ENCODE measurements at regions of chr12 and their contacts with region 1.

Region 1: GRCh38 chr12:27733052-27733656 is 22.5 kb downstream of the MRPS35 start:
- DNase-seq: peak in 6 of 9 donors; percentile 12 to 42 (median 28)
- ATAC-seq: peak; percentile 73
- H3K4me3 ChIP-seq: no peak overlapping the region
- H3K4me3 Mint-ChIP-seq: no peak overlapping the region
- H3K27ac ChIP-seq: no peak overlapping the region
- H3K27ac Mint-ChIP-seq: no peak overlapping the region
- H3K4me1 ChIP-seq: no peaks in the 10 kb centered on the region
- H3K4me1 Mint-ChIP-seq: peaks cover 0 to 3% (median 0%) of the 10 kb centered on the region in 7 donors
- H3K27me3 ChIP-seq: no peaks in the 10 kb centered on the region
- H3K27me3 Mint-ChIP-seq: no peaks in the 10 kb centered on the region

Region 2: DNA sequence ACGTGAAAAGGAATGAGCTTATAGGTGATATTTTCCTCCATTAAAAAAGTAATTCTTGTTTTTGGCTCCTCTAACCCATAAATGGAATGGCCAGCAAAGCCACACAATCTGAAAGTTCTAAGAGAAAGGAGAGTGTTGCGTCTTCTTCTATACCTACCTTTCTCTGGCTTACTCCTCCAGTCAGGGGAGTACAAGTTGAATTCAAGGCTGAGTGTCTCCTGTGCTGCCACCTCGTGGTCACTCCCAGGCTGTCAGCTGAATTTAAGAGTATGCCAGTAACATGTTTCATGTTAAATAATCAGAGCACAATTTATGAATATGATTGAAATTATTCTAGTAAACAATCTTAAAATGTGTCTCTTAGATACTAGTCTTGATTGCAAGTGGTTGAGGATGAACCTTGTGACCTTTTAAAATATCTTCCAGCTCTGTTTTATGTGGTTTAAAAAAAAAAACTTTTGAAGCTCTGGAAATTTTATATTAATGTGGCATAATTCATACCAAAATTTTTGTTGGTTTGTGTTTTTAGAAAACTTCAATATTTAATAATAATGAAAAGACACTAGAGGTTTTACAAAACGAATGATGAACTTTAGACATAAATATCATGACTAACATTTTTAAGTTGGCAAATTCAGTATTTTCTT is 207.7 kb after region 1 on chr12:
- CTCF ChIA-PET with region 1: interaction called, 13 read pairs
- POLR2A ChIA-PET with region 1: no interaction called
- intact Hi-C with region 1: loop called in 1 of 2 experiments (anchors 1 kb)
- DNase-seq: peak; percentile 19 to 59 (median 48)
- ATAC-seq: peak; percentile 84
- H3K4me3 ChIP-seq: no peak overlapping the region
- H3K4me3 Mint-ChIP-seq: no peak overlapping the region
- H3K27ac ChIP-seq: no peak overlapping the region
- H3K27ac Mint-ChIP-seq: no peak overlapping the region
- H3K4me1 ChIP-seq: no peaks in the 10 kb centered on the region
- H3K4me1 Mint-ChIP-seq: no peaks in the 10 kb centered on the region
- H3K27me3 ChIP-seq: no peaks in the 10 kb centered on the region
- H3K27me3 Mint-ChIP-seq: peaks cover 4 to 20% (median 8%) of the 10 kb centered on the region in 5 donors

Region 3: GRCh38 chr12:28872654-28873268 is 1139.6 kb after region 1 on chr12:
- CTCF ChIA-PET with region 1: no interaction called
- POLR2A ChIA-PET with region 1: no interaction called
- intact Hi-C with region 1: loop called in 1 of 2 experiments (anchors 5 kb)
- DNase-seq: peak in 1 of 9 donors; percentile 20
- ATAC-seq: no peak
- H3K4me3 ChIP-seq: no peak overlapping the region
- H3K4me3 Mint-ChIP-seq: no peak overlapping the region
- H3K27ac ChIP-seq: no peak overlapping the region
- H3K27ac Mint-ChIP-seq: no peak overlapping the region
- H3K4me1 ChIP-seq: no peaks in the 10 kb centered on the region
- H3K4me1 Mint-ChIP-seq: no peaks in the 10 kb centered on the region
- H3K27me3 ChIP-seq: no peaks in the 10 kb centered on the region
- H3K27me3 Mint-ChIP-seq: peaks cover 0 to 10% (median 0%) of the 10 kb centered on the region in 5 donors